Activated naive CD4-positive, alpha-beta T cell treated with anti-CD3 and anti-CD28 coated beads, Interleukin-2, amount 10 ng/mL, durations not matched to agents 7 days and 5 days (primary cell): ENCODE measurements at regions of chr11 and their contacts with region 1.

Region 1: DNA sequence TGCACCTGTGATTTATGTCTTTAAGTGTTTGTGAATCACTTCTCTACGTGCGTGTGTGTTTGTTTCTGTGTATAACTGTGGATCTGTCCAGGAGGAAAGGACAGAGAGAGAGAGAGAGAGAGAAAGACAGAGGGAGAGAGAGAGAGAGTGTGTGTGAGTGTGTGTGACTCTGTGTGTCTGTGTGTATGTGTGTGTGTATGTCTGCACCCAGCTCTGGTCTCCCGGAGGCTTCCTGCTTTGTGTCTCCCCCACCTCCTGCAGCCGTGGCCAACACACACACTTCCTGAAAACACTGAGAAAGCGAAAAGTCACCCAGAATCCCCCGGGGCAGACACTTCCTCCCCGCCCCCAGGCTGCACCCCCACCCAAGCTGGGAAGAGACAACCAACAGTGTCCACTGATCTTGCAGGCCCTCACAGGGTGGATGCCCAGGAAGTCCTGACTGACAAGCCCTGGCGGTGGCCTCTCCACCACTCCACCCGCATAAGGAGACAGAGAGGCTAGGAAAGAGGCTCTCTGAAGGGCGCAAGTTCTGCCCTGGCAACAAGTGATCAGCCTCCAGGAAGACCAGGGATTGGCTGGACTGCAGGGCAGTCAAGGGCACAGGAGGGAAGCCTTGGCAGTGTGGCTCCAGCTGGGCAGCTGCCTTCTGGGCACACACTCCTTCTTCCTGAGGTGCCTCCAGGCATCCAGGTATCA is 30.0 kb downstream of the ARAP1 start:
- DNase-seq: peak; percentile 91
- H3K4me3 Mint-ChIP-seq: peak overlapping the region; percentile 89
- H3K27ac Mint-ChIP-seq: peak overlapping the region; percentile 94
- H3K4me1 Mint-ChIP-seq: peaks cover 58% of the 10 kb centered on the region
- H3K27me3 Mint-ChIP-seq: peaks cover 4% of the 10 kb centered on the region

Region 2: GRCh38 chr11:72710278-72710677 is 11.9 kb before region 1 on chr11:
- CTCF ChIA-PET with region 1: no interaction called
- DNase-seq: no peak
- H3K4me3 Mint-ChIP-seq: no peak overlapping the region
- H3K27ac Mint-ChIP-seq: peak overlapping the region; percentile 49
- H3K4me1 Mint-ChIP-seq: no peaks in the 10 kb centered on the region
- H3K27me3 Mint-ChIP-seq: no peaks in the 10 kb centered on the region

Region 3: DNA sequence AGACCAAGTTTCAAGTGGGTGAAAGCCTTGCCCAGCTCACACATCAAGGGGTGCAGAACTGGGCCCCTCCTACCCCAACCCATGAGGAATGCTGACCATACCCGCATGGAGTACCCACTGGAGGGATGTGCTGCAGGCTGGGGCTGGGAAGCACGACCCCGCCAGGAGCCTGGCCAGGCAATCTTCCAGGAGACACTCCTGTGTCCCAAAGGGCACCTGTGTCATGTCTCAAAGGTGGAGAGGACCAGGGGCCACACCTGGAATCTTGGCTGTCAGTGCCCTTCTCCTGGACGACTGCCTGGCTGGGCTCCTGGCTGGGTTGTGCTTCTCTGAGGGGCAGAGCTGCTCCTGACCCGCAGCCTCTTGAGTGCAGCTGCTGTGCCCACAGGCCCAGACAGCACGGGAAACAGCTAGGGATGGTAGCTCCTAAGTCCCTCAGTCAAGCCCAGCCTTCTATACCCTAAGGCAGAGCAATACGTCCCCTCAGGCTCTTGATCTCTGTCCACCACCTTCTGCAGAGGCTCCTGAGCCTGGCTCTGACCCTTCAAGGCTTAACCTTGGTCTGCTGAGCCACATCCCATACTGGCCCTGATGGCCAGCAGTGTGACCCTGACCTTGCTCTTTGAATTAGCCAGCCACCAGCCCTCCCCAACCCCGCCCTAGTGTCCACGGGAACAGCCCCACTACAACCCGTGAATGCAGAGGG is 23.5 kb after region 1 on chr11:
- CTCF ChIA-PET with region 1: interaction called, 11 read pairs
- DNase-seq: no peak
- H3K4me3 Mint-ChIP-seq: no peak overlapping the region
- H3K27ac Mint-ChIP-seq: no peak overlapping the region
- H3K4me1 Mint-ChIP-seq: peaks cover 45% of the 10 kb centered on the region
- H3K27me3 Mint-ChIP-seq: no peaks in the 10 kb centered on the region

Region 4: GRCh38 chr11:72760539-72761405 is 38.6 kb after region 1 on chr11:
- CTCF ChIA-PET with region 1: no interaction called
- DNase-seq: no peak
- H3K4me3 Mint-ChIP-seq: no peak overlapping the region
- H3K27ac Mint-ChIP-seq: no peak overlapping the region
- H3K4me1 Mint-ChIP-seq: peaks cover 6% of the 10 kb centered on the region
- H3K27me3 Mint-ChIP-seq: peaks cover 4% of the 10 kb centered on the region

Region 5: GRCh38 chr11:72787216-72788104 is 65.3 kb after region 1 on chr11:
- CTCF ChIA-PET with region 1: interaction called, 102 read pairs
- DNase-seq: no peak
- H3K4me3 Mint-ChIP-seq: no peak overlapping the region
- H3K27ac Mint-ChIP-seq: no peak overlapping the region
- H3K4me1 Mint-ChIP-seq: peaks cover 19% of the 10 kb centered on the region
- H3K27me3 Mint-ChIP-seq: peaks cover 19% of the 10 kb centered on the region

Region 6: GRCh38 chr11:72814286-72815109 is 92.3 kb after region 1 on chr11 and contains the start of gene ATG16L2:
- CTCF ChIA-PET with region 1: interaction called, 11 read pairs
- DNase-seq: peak; percentile 90
- H3K4me3 Mint-ChIP-seq: peak within 1 kb of the TSS; percentile 99
- H3K27ac Mint-ChIP-seq: peak within 1 kb of the TSS; percentile 99
- H3K4me1 Mint-ChIP-seq: peaks cover 59% of the 10 kb centered on the region
- H3K27me3 Mint-ChIP-seq: no peaks in the 10 kb centered on the region

Region 7: DNA sequence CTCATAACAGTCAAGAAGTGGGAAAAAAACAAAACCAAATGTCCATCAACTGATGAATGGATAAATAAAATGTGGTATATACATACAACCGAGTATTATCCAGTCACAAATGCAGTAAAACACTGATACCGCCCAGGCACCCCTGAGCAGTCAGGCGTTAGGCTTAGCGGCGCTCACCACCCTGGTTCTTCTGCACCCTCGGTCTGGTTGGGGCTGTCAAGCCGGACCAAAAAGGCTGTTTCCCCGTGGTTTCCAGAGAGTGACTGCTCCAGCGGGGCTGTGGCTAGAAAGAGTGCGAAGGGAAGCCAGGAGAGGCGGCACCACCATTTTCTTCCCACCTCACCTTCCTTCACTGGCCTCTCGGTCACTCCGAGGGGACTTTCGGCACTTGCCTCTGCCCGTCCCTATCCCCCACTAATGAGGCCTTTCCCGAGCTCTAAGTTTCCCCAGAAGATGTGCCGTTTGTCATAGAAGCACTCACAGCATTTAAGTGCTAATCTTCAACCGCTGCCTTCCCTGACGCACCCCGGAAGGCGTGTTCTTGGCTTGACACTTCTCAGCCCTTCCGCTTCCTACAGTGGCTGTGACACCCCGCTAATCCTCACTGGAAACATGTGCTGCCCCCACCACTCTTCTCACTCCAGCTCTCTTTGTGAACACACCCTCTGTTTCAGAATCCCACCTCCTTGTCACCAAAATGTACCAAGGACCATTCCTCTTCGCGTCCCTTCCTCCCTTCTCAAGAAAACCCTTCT is 377.5 kb after region 1 on chr11:
- CTCF ChIA-PET with region 1: no interaction called
- DNase-seq: no peak
- H3K4me3 Mint-ChIP-seq: no peak overlapping the region
- H3K27ac Mint-ChIP-seq: no peak overlapping the region
- H3K4me1 Mint-ChIP-seq: peaks cover 2% of the 10 kb centered on the region
- H3K27me3 Mint-ChIP-seq: no peaks in the 10 kb centered on the region

Region 8: GRCh38 chr11:73177778-73178577 is 455.8 kb after region 1 on chr11:
- CTCF ChIA-PET with region 1: interaction called, 37 read pairs
- DNase-seq: peak; percentile 90
- H3K4me3 Mint-ChIP-seq: no peak overlapping the region
- H3K27ac Mint-ChIP-seq: no peak overlapping the region
- H3K4me1 Mint-ChIP-seq: peaks cover 29% of the 10 kb centered on the region
- H3K27me3 Mint-ChIP-seq: peaks cover 49% of the 10 kb centered on the region